Spleen (tissue), 13 donors: ENCODE measurements at regions of chr3 and their contacts with region 1.

Region 1: DNA sequence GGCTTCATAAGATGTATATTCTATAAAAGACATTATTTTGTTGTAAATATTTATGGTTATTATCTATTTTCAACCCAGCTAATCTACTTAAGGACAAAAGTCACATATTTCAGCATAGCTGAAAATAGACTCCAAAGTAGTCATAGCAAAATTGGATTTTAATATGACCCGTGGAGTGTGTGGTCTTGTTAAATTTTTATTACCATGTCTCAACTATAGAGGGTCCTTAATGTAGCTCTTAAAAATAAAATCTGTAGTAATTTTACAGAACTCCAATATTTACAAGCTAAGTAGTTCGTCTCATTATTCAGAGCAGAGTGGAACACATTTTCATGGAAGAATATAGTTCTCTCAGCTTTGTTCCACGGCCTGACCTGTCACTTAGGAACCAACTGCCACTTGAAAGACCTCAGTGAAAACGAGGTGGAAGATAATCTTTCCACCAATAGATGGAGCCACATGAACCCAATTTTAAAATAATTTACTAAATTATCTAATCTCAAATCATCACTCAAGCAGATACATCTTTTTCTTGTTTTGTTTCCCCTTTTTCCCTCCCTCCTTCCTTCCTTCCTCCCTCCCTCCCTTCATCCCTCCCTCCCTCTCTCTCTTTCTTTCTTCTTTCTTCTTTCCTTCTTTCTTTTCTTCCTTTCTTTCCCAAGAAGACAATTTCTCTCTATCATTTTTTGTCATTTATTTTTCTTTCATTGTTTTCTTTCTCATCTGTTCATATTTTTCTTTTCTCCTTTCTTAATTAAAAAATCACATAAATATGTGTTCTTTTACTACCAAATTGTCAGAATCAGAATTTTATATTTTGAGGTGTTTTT is 97.2 kb downstream of the CLDN1 start:
- DNase-seq: no peak
- H3K4me3 ChIP-seq: no peak overlapping the region
- H3K27ac ChIP-seq: no peak overlapping the region
- H3K4me1 ChIP-seq: peaks cover 0 to 3% (median 0%) of the 10 kb centered on the region in 6 donors
- H3K27me3 ChIP-seq: no peaks in the 10 kb centered on the region
- CTCF ChIP-seq: peak in 6 of 11 experiments; percentile 33 to 53 (median 47)
- POLR2A ChIP-seq: no peak

Region 2: GRCh38 chr3:190139365-190139764 is 85.7 kb before region 1 on chr3:
- intact Hi-C with region 1: no loop called
- DNase-seq: no peak
- H3K4me3 ChIP-seq: no peak overlapping the region
- H3K27ac ChIP-seq: no peak overlapping the region
- H3K4me1 ChIP-seq: no peaks in the 10 kb centered on the region
- H3K27me3 ChIP-seq: no peaks in the 10 kb centered on the region
- CTCF ChIP-seq: no peak
- POLR2A ChIP-seq: no peak

Region 3: DNA sequence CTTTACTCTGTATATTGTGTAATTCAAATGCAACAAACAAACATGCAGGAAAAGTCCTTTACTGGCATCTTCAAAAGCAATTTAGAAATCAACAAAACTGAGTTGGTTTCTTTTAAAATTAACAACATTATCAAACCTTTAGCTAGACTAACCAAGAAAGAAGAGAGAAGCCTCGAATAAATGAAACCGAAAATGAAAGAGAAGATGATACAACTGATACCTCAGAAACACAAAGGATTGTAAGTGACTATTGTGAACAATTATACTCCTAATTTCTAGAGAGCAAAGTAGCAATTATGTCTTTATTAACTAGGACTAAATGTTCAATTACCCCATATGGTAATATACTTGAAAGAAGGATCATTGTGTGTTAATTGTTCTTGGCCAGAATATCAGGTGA is 55.2 kb before region 1 on chr3:
- intact Hi-C with region 1: no loop called
- DNase-seq: no peak
- H3K4me3 ChIP-seq: peak overlapping the region in 3 of 8 donors; percentile 5 to 32 (median 13)
- H3K27ac ChIP-seq: peak overlapping the region in 4 of 8 donors; percentile 6 to 29 (median 15)
- H3K4me1 ChIP-seq: peaks cover 0 to 25% (median 6%) of the 10 kb centered on the region in 6 donors
- H3K27me3 ChIP-seq: no peaks in the 10 kb centered on the region
- CTCF ChIP-seq: no peak
- POLR2A ChIP-seq: no peak

Region 4: GRCh38 chr3:190321789-190322603 is 96.9 kb after region 1 on chr3 and contains the start of gene CLDN1:
- intact Hi-C with region 1: loop called (anchors 5 kb)
- DNase-seq: peak; percentile 90
- H3K4me3 ChIP-seq: peak within 1 kb of the TSS; percentile 36 to 71 (median 44)
- H3K27ac ChIP-seq: peak within 1 kb of the TSS in 1 of 8 donors; percentile 27
- H3K4me1 ChIP-seq: peaks cover 0 to 18% (median 10%) of the 10 kb centered on the region in 6 donors
- H3K27me3 ChIP-seq: peaks cover 0 to 47% (median 11%) of the 10 kb centered on the region in 7 donors
- CTCF ChIP-seq: peak; percentile 31 to 92 (median 80)
- POLR2A ChIP-seq: no peak
- total RNA-seq, gene CLDN1: 0.26 to 3.0 (median 0.91) TPM

Region 5: DNA sequence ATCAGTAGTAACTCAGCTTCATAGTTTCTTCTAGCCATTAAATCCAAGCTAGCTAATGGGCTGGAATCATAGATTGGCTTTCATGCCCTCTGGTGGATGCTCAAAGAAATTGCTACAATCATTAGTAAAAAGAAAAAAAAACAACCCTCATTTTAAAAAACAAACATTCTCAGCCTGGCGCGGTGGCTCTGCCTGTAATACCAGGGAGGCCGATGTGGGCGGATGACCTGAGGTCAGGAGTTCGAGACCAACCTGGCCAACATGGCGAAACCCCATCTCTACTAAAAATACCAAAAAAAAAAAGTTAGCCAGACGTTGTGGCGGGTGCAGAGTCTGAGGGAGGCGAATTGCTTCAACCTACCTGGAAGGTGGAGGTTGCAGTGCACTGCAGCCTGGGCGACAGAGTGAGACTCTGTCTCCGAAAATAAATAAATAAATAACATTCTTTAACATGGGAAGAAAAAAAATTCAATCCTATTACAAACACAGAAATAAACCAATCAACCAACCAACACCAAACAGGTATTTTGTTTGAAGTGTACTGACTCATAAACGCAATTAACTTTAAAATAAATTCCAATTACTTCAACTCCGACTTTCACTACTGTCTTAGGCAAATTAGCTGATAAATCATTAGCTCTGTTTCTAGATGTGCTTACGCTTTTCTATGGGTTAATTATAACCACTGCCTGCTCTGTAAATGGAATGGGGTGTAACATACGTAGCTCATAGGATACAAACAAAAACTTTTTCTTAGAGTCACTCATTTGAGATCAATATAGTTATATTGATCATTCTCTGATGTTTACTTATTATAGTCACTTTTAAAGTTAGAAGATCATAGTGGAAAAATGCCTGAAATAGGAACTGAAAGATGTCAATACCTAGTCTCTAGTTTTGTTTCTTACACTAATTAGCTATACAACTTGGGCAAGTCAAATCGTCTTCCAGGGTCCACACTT is 199.7 kb after region 1 on chr3:
- intact Hi-C with region 1: loop called (anchors 10 kb)
- DNase-seq: peak; percentile 58
- H3K4me3 ChIP-seq: no peak overlapping the region
- H3K27ac ChIP-seq: no peak overlapping the region
- H3K4me1 ChIP-seq: peaks cover 0 to 8% (median 0%) of the 10 kb centered on the region in 6 donors
- H3K27me3 ChIP-seq: no peaks in the 10 kb centered on the region
- CTCF ChIP-seq: peak in 10 of 11 experiments; percentile 23 to 62 (median 52)
- POLR2A ChIP-seq: no peak

Region 6: GRCh38 chr3:190767851-190768250 is 542.8 kb after region 1 on chr3:
- intact Hi-C with region 1: no loop called
- DNase-seq: no peak
- H3K4me3 ChIP-seq: no peak overlapping the region
- H3K27ac ChIP-seq: no peak overlapping the region
- H3K4me1 ChIP-seq: no peaks in the 10 kb centered on the region
- H3K27me3 ChIP-seq: no peaks in the 10 kb centered on the region
- CTCF ChIP-seq: no peak
- POLR2A ChIP-seq: no peak